ENCODE measurements at regions of chr9 and their contacts with region 1.

Region 1: GRCh38 chr9:4832786-4833579 is 40.2 kb downstream of the RCL1 start:
- DNase-seq: peak; percentile 96
- ATAC-seq: peak; percentile 85
- H3K4me3 ChIP-seq: 0 out of 2 replicates have a peak overlapping the region, but pooled peaks have one; percentile 2
- H3K27ac ChIP-seq: peak overlapping the region; percentile 97
- H3K4me1 ChIP-seq: peaks cover 78% of the 10 kb centered on the region
- H3K27me3 ChIP-seq: no peaks in the 10 kb centered on the region
- CTCF ChIP-seq: no peak

Region 2: GRCh38 chr9:4796988-4797853 is 35.8 kb before region 1 on chr9:
- CTCF ChIA-PET with region 1: interaction called, 4 read pairs
- POLR2A ChIA-PET with region 1: no interaction called
- intact Hi-C with region 1: loop called (anchors 5 kb)
- DNase-seq: peak; percentile 50
- ATAC-seq: no peak
- H3K4me3 ChIP-seq: no peak overlapping the region
- H3K27ac ChIP-seq: no peak overlapping the region
- H3K4me1 ChIP-seq: peaks cover 9% of the 10 kb centered on the region; the same call in 1 of the 2 replicates
- H3K27me3 ChIP-seq: no peaks in the 10 kb centered on the region
- CTCF ChIP-seq: peak; percentile 73

Region 3: GRCh38 chr9:4891674-4892073 is 58.7 kb after region 1 on chr9:
- CTCF ChIA-PET with region 1: no interaction called
- POLR2A ChIA-PET with region 1: no interaction called
- intact Hi-C with region 1: loop called (anchors 1 kb)
- DNase-seq: peak; percentile 49
- ATAC-seq: peak; percentile 29; the same call in 1 of the 2 replicates
- H3K4me3 ChIP-seq: no peak overlapping the region
- H3K27ac ChIP-seq: peak overlapping the region; percentile 96
- H3K4me1 ChIP-seq: peaks cover 42% of the 10 kb centered on the region
- H3K27me3 ChIP-seq: no peaks in the 10 kb centered on the region
- CTCF ChIP-seq: no peak